ENCODE measurements at regions of chr5 and their contacts with region 1.

Region 1: GRCh38 chr5:111278845-111279504 is 54.8 kb downstream of the CAMK4 start:
- DNase-seq: peak; percentile 72
- ATAC-seq: peak; percentile 43

Region 2: GRCh38 chr5:111159845-111160244 is 119.1 kb before region 1 on chr5:
- intact Hi-C with region 1: loop called (anchors 10 kb)
- DNase-seq: no peak
- ATAC-seq: no peak

Region 3: GRCh38 chr5:111313017-111313724 is 34.2 kb after region 1 on chr5:
- intact Hi-C with region 1: no loop called
- DNase-seq: no peak
- ATAC-seq: no peak

Region 4: DNA sequence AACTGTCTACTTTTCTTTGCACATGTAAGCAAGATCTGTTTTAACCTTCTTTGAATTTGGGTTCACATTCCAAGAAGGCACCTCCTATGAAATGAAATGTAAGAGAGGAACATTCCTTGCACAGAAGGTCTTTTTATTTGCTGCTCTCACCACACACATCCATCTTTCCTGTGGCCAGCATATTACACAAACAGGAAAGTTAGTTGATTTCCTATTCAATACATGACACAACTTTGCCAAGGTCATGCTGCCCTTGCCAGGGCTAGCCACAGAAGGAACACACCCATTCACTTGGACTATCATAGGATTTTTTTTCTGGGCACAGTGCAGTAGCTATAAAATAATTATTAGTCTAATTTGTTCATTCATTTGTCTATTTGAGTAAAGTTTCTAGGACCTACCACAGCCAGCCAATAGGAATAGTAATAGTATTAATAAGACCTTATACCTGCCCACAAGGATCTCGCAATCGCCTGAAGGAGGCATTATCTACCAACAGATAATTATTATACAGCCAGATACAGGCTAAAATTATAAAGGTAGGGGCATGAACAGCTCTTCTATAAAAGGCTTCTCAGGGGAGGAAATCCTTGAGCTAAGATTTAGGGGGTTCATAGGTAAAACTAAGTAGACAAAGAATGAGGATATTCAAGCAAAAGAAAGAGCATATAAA is 556.1 kb after region 1 on chr5:
- intact Hi-C with region 1: no loop called
- DNase-seq: no peak
- ATAC-seq: no peak